ENCODE measurements at regions of chr6 and their contacts with region 1.

Region 1: DNA sequence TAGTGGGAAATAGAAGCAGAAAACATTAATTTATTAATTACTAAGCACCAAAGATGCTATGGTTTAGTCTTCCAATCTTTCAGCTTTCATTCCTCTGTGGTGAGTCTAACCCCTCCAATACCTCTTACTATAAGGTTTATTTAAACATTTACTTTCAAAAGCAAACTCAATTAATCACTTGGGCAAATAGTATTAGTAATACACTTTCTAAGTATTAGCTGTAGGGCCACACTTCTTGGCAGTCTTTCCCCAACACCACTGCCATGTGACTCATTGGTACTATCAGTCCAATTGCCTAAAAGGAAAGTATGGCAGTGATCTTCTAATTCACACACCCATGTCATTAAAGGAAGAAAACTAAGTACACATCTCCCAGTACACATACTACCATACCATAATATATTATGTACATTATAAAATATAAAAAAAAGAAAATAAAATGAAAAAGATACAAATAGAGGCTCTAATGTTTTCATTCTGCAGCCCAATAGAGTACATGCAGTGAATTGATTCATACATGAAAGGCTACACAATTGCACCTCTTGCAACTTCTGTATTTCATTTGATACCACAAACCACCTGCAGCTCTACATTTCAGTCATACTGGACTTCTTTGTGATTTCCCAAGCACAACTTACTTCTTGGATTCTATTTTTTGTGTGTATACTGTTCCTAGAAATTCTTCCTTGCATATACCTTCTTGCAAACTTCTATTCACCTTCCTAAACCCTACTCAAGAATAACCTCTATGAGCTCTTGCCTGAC is 218.6 kb downstream of the PKHD1 start:
- H3K4me3 ChIP-seq: no peak overlapping the region
- H3K27ac ChIP-seq: no peak overlapping the region
- H3K4me1 ChIP-seq: no peaks in the 10 kb centered on the region
- CTCF ChIP-seq: no peak

Region 2: DNA sequence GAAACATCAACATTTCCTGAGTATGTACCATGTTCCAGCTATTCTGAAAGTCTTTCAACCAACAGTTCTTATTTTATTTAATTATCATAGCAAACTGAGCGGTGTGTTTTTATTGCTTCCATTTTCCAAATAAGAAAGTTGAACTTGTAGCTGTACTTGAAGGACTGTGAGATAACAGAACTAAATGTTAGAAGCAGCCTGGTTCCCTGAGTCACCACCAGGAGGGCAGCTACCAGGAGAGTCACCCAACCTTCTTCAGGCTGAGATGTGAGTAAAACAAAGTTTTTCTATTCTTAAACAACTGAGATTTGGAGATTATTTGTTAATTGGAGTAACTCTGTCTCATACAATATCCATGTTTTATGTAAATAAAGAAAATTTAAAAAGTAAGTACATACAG is 184.7 kb before region 1 on chr6:
- CTCF ChIA-PET with region 1: no interaction called
- POLR2A ChIA-PET with region 1: no interaction called
- H3K4me3 ChIP-seq: no peak overlapping the region
- H3K27ac ChIP-seq: no peak overlapping the region
- H3K4me1 ChIP-seq: no peaks in the 10 kb centered on the region
- CTCF ChIP-seq: no peak

Region 3: DNA sequence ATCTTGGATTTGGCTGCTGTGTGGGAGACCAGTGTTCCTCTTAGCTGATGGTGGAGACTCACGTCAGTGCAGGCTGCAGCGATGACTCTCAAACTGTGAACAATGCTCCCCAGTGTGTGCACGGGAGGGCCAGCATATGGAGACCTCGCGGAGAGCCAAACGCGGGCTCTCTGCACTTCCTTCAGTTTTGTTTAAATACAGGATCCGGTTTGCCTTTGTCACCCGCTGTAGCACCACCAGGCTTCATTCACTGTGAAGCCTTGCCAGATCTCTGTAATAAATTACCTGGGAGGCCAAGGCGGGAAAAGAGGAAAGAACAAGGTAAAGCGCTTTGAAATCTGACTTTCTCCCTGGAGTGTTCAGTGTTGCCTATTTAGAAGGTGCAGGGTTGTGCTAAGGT is 771.4 kb after region 1 on chr6:
- CTCF ChIA-PET with region 1: no interaction called
- POLR2A ChIA-PET with region 1: interaction called, 11 read pairs
- H3K4me3 ChIP-seq: no peak overlapping the region
- H3K27ac ChIP-seq: no peak overlapping the region
- H3K4me1 ChIP-seq: peaks cover 3% of the 10 kb centered on the region
- CTCF ChIP-seq: no peak

Measured in HEK293 (cell line).